ENCODE measurements at regions of chr1 and their contacts with region 1.

Region 1: GRCh38 chr1:199684686-199685273 is 342.7 kb upstream of the NR5A2 start:
- ATAC-seq: peak; percentile 73 to 91 (median 84)
- H3K4me3 ChIP-seq: no peak overlapping the region
- H3K27ac ChIP-seq: no peak overlapping the region
- H3K4me1 ChIP-seq: peaks cover 17 to 19% of the 10 kb centered on the region in 2 donors

Region 2: GRCh38 chr1:200510228-200510623 is 825.4 kb after region 1 on chr1:
- in situ Hi-C with region 1: loop called in 1 of 9 experiments (anchors 25 kb)
- ATAC-seq: peak; percentile 85 to 100 (median 91)
- H3K4me3 ChIP-seq: no peak overlapping the region
- H3K27ac ChIP-seq: no peak overlapping the region
- H3K4me1 ChIP-seq: peaks cover 0 to 12% of the 10 kb centered on the region in 2 donors

Measured in motor neuron (in vitro differentiated cells).